ENCODE measurements at regions of chr1 and their contacts with region 1.

Region 1: DNA sequence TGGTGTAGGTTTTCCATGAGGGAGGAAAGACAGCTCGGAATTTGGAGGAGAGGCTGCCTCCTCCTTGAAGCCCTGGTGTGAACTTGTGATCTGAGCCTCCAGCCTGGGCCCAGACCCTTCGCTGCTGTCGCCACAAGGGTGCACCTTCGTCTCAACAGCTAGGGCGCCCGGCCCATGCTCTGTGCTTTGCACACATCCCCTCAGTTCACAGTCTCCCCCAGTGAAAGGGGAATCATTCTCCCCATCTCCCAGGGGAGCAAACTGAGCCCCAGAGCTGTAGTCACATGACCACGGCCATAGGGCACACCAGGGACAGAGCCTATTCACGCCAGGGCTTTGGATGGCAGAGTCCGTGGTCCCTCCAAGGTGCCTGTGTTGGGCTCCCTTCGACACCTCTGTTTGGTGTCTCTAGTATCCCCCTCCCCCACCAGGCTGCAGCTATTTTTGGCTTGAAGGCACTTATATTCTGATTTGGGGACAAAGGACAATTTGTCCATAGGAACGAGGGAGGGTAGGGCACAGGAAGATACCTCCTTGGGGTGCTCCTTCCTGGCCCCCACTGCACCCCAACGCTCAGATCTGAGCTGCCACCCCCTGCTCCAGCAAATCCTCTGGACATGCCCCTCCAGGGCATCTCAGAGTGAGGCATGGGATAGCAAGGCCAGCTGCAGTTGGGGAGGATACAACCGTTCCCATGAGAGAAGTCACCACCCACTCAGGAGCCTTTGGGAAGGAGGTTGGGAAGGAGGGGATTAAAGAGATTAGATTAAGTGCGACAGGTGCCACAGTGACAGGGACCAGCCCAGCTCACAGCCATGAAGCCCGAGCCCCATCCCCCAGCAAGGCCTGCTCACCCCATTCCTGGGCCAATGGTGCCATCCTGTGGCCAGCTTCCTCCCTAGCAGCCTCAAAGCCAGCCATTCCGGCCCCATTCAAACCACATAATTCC is 15.7 kb downstream of the MATN1 start:
- DNase-seq: peak; percentile 61 to 76
- ATAC-seq: peak; percentile 80 to 83
- H3K4me3 ChIP-seq: no peak overlapping the region
- H3K27ac ChIP-seq: no peak overlapping the region
- H3K4me1 ChIP-seq: peaks cover 4 to 6% of the 10 kb centered on the region in 2 donors
- H3K27me3 ChIP-seq: no peaks in the 10 kb centered on the region
- CTCF ChIP-seq: peak; percentile 83 to 97 (median 88)
- POLR2A ChIP-seq: no peak

Region 2: GRCh38 chr1:28789412-28789811 is 1918.3 kb before region 1 on chr1:
- in situ Hi-C with region 1: no loop called
- intact Hi-C with region 1: loop called (anchors 5 kb)
- DNase-seq: no peak
- ATAC-seq: no peak
- H3K4me3 ChIP-seq: no peak overlapping the region
- H3K27ac ChIP-seq: no peak overlapping the region
- H3K4me1 ChIP-seq: peaks cover 11 to 15% of the 10 kb centered on the region in 2 donors
- H3K27me3 ChIP-seq: no peaks in the 10 kb centered on the region
- CTCF ChIP-seq: no peak
- POLR2A ChIP-seq: no peak

Region 3: GRCh38 chr1:29235955-29236684 is 1471.6 kb before region 1 on chr1 and contains the start of gene PTPRU:
- in situ Hi-C with region 1: loop called in 2 of 4 experiments (anchors 5 to 10 kb)
- intact Hi-C with region 1: loop called (anchors 1 kb)
- DNase-seq: peak; percentile 50 to 60
- ATAC-seq: peak; percentile 58 to 62
- H3K4me3 ChIP-seq: peak within 1 kb of the TSS; percentile 59 to 77 (median 72)
- H3K27ac ChIP-seq: peak within 1 kb of the TSS; percentile 73 to 86 (median 80)
- H3K4me1 ChIP-seq: peaks cover 9 to 11% of the 10 kb centered on the region in 2 donors
- H3K27me3 ChIP-seq: no peaks in the 10 kb centered on the region
- CTCF ChIP-seq: peak; percentile 59 to 99 (median 98)
- POLR2A ChIP-seq: peak; percentile 56 to 58
- total RNA-seq, gene PTPRU: 11.4 to 59.4 (median 35.3) TPM

Region 4: GRCh38 chr1:29793101-29793546 is 914.6 kb before region 1 on chr1:
- in situ Hi-C with region 1: no loop called
- intact Hi-C with region 1: loop called (anchors 2 kb)
- DNase-seq: peak; percentile 38 to 65
- ATAC-seq: peak; percentile 36 to 88
- H3K4me3 ChIP-seq: no peak overlapping the region
- H3K27ac ChIP-seq: no peak overlapping the region
- H3K4me1 ChIP-seq: no peaks in the 10 kb centered on the region
- H3K27me3 ChIP-seq: no peaks in the 10 kb centered on the region
- CTCF ChIP-seq: peak in 4 of 5 experiments; percentile 31 to 76 (median 68)
- POLR2A ChIP-seq: no peak

Region 5: GRCh38 chr1:29901624-29902325 is 805.9 kb before region 1 on chr1:
- in situ Hi-C with region 1: no loop called
- intact Hi-C with region 1: loop called (anchors 2 kb)
- DNase-seq: no peak
- ATAC-seq: peak; percentile 45 to 46
- H3K4me3 ChIP-seq: no peak overlapping the region
- H3K27ac ChIP-seq: peak overlapping the region in 3 of 4 donors; percentile 36 to 67 (median 37)
- H3K4me1 ChIP-seq: peaks cover 14 to 21% of the 10 kb centered on the region in 2 donors
- H3K27me3 ChIP-seq: no peaks in the 10 kb centered on the region
- CTCF ChIP-seq: no peak
- POLR2A ChIP-seq: no peak

Region 6: GRCh38 chr1:30379684-30380624 is 327.7 kb before region 1 on chr1:
- in situ Hi-C with region 1: no loop called
- intact Hi-C with region 1: loop called (anchors 1 kb)
- DNase-seq: peak; percentile 18 to 31
- ATAC-seq: peak; percentile 76 to 79
- H3K4me3 ChIP-seq: no peak overlapping the region
- H3K27ac ChIP-seq: no peak overlapping the region
- H3K4me1 ChIP-seq: peaks cover 4 to 6% of the 10 kb centered on the region in 2 donors
- H3K27me3 ChIP-seq: no peaks in the 10 kb centered on the region
- CTCF ChIP-seq: peak; percentile 63 to 86 (median 77)
- POLR2A ChIP-seq: no peak

Region 7: GRCh38 chr1:30991862-30992606 is 284.3 kb after region 1 on chr1:
- in situ Hi-C with region 1: no loop called
- intact Hi-C with region 1: no loop called
- DNase-seq: peak; percentile 18 to 35
- ATAC-seq: peak; percentile 77 to 89
- H3K4me3 ChIP-seq: no peak overlapping the region
- H3K27ac ChIP-seq: peak overlapping the region; percentile 58 to 79 (median 66)
- H3K4me1 ChIP-seq: peaks cover 69 to 71% of the 10 kb centered on the region in 2 donors
- H3K27me3 ChIP-seq: no peaks in the 10 kb centered on the region
- CTCF ChIP-seq: no peak
- POLR2A ChIP-seq: no peak

Region 8: DNA sequence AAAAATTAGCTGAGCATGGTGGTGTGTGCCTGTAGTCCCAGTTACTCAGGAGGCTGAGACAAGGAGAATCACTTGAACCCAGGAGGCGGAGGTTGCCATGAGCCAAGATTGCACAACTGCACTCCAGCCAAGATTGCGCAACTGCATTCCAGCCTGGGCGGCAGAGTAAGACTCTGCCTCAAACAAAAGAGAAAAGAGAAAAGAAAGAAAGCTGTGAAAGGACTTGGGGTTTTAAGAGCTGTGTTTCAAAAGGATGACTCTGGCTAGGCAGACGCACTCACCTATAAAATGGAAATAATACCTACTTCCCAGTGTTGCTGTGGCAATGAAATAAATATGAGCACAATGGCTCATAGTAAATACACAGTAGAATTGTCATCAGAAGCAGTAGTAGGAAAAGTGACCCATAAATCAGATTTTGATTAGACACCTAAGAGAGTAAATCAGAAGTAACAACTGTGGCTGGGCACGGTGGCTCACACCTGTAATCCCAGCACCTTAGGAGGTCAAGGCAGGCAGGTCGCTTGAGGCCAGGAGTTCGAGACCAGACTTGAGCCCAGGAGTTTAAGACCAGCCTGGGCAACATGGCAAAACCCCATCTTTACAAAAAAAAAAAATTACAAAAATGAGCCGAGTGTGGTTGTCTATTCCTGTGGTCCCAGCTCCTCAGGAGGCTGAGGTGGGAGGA is 403.7 kb after region 1 on chr1:
- in situ Hi-C with region 1: no loop called
- intact Hi-C with region 1: no loop called
- DNase-seq: peak in 1 of 2 donors; percentile 29
- ATAC-seq: peak in 1 of 2 donors; percentile 21
- H3K4me3 ChIP-seq: no peak overlapping the region
- H3K27ac ChIP-seq: no peak overlapping the region
- H3K4me1 ChIP-seq: peaks cover 0 to 6% of the 10 kb centered on the region in 2 donors
- H3K27me3 ChIP-seq: no peaks in the 10 kb centered on the region
- CTCF ChIP-seq: no peak
- POLR2A ChIP-seq: no peak

Measured in gastrocnemius medialis (tissue), 4 donors.